Heart left ventricle (tissue), 16 donors: ENCODE measurements at regions of chr1 and their contacts with region 1.

Region 1: GRCh38 chr1:54950369-54951163 is 29.9 kb upstream of the TMEM61 start:
- DNase-seq: peak; percentile 52 to 72 (median 66)
- ATAC-seq: peak; percentile 68 to 91 (median 84)
- H3K4me3 ChIP-seq: peak overlapping the region in 10 of 12 donors; percentile 23 to 44 (median 36)
- H3K27ac ChIP-seq: peak overlapping the region in 7 of 12 donors; percentile 47 to 69 (median 60)
- H3K4me1 ChIP-seq: peaks cover 0 to 13% (median 9%) of the 10 kb centered on the region in 12 donors
- H3K27me3 ChIP-seq: no peaks in the 10 kb centered on the region
- CTCF ChIP-seq: peak; percentile 72 to 81 (median 78)
- POLR2A ChIP-seq: no peak

Region 2: GRCh38 chr1:54996359-54996868 is 45.8 kb after region 1 on chr1:
- intact Hi-C with region 1: loop called (anchors 1 to 2 kb)
- DNase-seq: peak; percentile 48 to 88 (median 72)
- ATAC-seq: peak; percentile 71 to 88 (median 78)
- H3K4me3 ChIP-seq: no peak overlapping the region
- H3K27ac ChIP-seq: no peak overlapping the region
- H3K4me1 ChIP-seq: peaks cover 0 to 13% (median 3%) of the 10 kb centered on the region in 12 donors
- H3K27me3 ChIP-seq: peaks cover 5 to 50% (median 27%) of the 10 kb centered on the region in 9 donors
- CTCF ChIP-seq: peak; percentile 57 to 77 (median 72)
- POLR2A ChIP-seq: no peak

Region 3: DNA sequence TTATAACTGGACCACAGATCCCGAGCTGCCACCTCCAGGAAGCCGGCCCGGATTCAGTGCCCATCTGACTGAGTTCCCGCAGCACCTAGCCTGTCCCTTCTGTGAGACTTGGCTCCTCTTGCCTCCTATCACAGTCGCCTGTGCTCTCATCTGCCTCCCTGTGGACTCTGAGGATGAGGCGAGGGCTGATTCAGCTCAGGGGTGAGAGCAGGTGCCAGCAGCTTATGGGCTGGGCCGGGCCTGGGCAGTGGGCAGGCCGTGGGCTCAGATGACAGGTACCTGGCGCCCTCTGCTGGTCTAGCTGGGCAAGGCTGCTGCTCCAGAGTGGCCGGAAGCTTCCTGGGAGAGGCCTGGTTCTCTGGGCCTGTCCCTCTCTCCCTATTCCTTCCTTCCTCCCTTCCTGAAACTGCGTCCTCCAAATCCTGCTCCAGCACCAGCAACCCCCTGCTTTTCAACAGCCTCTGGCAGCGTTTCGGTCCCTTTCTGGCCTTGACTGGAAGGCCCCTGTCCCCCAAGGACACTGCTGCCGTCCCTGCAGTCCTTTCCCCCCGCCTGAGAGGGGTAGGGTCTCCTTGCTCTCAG is 71.5 kb after region 1 on chr1:
- intact Hi-C with region 1: loop called in 5 of 10 experiments (anchors 1 to 5 kb)
- DNase-seq: peak; percentile 75 to 87 (median 82)
- ATAC-seq: peak; percentile 89 to 99 (median 98)
- H3K4me3 ChIP-seq: no peak overlapping the region
- H3K27ac ChIP-seq: no peak overlapping the region
- H3K4me1 ChIP-seq: peaks cover 0 to 4% (median 0%) of the 10 kb centered on the region in 12 donors
- H3K27me3 ChIP-seq: peaks cover 0 to 18% (median 0%) of the 10 kb centered on the region in 9 donors
- CTCF ChIP-seq: peak; percentile 68 to 86 (median 76)
- POLR2A ChIP-seq: no peak